PC-9 (cell line): ENCODE measurements at regions of chr7 and their contacts with region 1.

Region 1: GRCh38 chr7:5629941-5630340 is 151.5 kb downstream of the RNF216 start:
- DNase-seq: peak; percentile 52 to 72
- H3K4me3 ChIP-seq: no peak overlapping the region
- H3K27ac ChIP-seq: peak overlapping the region; percentile 37; the same call in 1 of the 2 replicates
- H3K4me1 ChIP-seq: peaks cover 13% of the 10 kb centered on the region
- H3K27me3 ChIP-seq: no peaks in the 10 kb centered on the region
- CTCF ChIP-seq: no peak

Region 2: GRCh38 chr7:5255832-5256231 is 374.1 kb before region 1 on chr7:
- CTCF ChIA-PET with region 1: interaction called, 10 read pairs
- POLR2A ChIA-PET with region 1: no interaction called
- intact Hi-C with region 1: no loop called
- DNase-seq: no peak
- H3K4me3 ChIP-seq: no peak overlapping the region
- H3K27ac ChIP-seq: no peak overlapping the region
- H3K4me1 ChIP-seq: no peaks in the 10 kb centered on the region
- H3K27me3 ChIP-seq: peaks cover 7% of the 10 kb centered on the region; the same call in 1 of the 2 replicates
- CTCF ChIP-seq: no peak

Region 3: DNA sequence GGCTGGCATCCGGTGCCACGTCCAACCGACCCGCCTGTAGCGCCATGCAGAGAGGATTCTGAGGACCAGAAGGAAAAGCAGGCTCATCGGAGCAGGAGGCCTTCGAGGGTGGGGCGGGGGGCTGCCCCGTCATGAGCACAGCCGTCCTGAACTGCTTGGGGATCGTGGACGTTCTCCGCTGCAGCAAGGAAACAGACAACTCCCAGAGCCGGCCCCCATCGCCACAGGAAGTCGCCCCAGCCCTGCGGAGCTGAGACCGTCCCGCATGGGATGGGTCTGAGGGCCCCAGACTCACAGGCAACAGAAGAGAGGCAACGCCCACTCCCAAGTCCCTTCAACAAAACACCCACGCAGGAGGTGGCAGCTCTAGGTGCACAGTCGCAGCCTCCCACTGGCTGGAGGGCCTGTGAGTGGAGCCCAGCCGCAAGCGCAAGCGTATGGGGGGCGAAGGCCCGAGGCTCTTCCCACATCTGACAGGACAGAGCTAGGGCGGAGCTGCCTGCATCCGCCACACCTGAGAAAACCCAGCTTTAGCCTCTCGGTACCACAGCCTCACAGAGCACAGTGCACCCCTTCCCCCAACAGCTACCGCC is 141.6 kb before region 1 on chr7:
- CTCF ChIA-PET with region 1: no interaction called
- POLR2A ChIA-PET with region 1: no interaction called
- intact Hi-C with region 1: no loop called
- DNase-seq: no peak
- H3K4me3 ChIP-seq: no peak overlapping the region
- H3K27ac ChIP-seq: no peak overlapping the region
- H3K4me1 ChIP-seq: 0 out of 2 replicates have a peak, but pooled peaks cover 5% of the 10 kb centered on the region
- H3K27me3 ChIP-seq: no peaks in the 10 kb centered on the region
- CTCF ChIP-seq: no peak

Region 4: DNA sequence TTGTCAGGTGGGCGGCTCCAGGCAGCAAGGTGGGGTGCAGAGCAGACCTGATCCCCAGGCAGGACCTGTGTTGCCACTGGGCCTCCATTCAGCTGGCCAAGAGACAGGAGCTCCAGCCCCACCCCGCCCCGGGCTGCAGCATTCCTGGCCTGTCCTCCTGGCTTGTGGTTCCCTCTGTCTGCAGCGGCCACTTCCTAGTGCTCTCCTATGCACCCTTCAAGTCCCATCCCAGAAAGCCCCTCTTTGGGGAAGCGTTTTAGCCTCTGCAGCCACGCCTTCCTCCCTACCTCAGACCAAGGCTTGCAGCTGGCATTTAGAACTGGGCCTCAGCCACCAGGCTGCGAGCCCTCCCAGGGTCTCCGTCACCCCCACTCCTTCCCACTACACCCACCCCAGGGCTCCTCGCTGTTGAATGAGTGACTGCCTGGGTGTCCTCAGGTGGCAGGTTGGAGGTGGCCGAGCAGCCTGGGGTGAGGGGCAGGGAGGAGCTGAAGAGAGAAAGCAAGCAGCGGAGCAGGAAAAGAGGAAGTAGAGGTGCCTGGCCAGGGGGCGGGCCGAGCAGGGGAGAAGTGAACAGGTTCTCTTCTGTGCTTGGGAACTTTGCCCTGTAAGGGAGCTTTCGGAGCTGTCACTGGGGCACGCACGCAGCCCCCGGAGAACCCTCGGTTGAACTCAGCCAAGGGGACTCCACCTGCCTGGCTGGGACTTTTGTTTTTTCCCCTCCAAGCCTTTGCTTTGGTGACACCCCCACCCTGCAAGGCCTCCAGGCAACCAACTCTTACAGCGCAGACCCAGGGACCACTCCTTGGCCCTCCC is 97.2 kb before region 1 on chr7:
- CTCF ChIA-PET with region 1: no interaction called
- POLR2A ChIA-PET with region 1: interaction called, 13 read pairs
- intact Hi-C with region 1: no loop called
- DNase-seq: peak; percentile 65 to 85
- H3K4me3 ChIP-seq: no peak overlapping the region
- H3K27ac ChIP-seq: no peak overlapping the region
- H3K4me1 ChIP-seq: peaks cover 32% of the 10 kb centered on the region
- H3K27me3 ChIP-seq: no peaks in the 10 kb centered on the region
- CTCF ChIP-seq: no peak

Region 5: DNA sequence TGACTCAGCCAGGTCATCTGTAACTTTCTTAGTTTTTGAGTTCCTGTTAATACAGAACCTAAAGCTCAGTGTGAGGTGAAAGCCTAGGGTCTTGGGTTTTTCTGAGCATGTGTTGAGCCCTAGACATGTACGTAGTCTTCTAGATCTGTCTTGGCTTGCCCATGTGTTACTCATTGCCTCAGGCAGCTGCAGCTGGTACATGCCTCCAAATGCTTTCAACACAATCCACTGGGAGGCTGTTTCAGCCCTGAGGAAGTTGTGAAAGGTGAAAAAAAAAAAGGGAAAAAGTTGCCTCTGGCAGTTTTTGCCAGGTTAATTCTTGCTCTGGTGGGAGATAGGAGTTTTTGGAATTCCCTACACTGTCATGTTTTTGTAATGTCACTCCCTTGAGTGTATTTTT is 16.9 kb after region 1 on chr7:
- CTCF ChIA-PET with region 1: interaction called, 17 read pairs
- POLR2A ChIA-PET with region 1: interaction called, 17 read pairs
- intact Hi-C with region 1: loop called (anchors 1 kb)
- DNase-seq: peak in 1 of 2 experiments; percentile 20
- H3K4me3 ChIP-seq: no peak overlapping the region
- H3K27ac ChIP-seq: no peak overlapping the region
- H3K4me1 ChIP-seq: peaks cover 26% of the 10 kb centered on the region
- H3K27me3 ChIP-seq: no peaks in the 10 kb centered on the region
- CTCF ChIP-seq: no peak

Region 6: DNA sequence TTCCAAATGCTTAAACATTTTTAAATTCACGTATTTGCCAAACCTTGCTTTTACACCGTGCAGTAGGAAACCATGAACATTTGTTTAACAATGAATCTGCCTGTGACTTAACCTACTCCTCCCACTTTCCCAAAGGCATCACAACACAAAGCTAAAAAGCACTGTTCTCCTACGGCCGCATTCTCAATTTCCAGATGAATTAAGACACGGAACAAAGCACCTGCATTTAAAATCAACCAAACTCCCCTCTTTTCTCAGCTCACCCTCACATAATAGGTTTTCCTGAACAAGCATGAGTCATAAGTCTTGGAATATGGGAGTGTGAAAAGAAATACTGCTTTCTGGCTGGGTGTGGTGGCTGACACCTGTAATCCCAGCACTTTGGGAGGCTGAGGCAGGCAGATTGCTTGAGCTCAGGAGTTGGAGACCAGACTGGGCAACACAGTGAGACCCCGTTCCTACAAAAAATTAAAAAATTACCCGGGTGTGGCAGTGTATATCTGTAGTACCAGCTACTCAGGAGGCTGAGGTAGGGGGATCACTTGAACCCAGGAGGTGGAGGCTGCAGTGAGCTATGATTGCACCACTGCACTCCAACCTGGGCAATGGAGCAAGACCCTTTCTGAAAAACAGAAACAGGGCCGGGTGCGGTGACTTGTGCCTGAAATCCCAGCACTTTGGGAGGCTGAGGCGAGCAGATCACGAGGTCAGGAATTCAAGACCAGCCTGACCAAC is 694.2 kb after region 1 on chr7:
- CTCF ChIA-PET with region 1: no interaction called
- POLR2A ChIA-PET with region 1: no interaction called
- intact Hi-C with region 1: no loop called
- DNase-seq: no peak
- H3K4me3 ChIP-seq: no peak overlapping the region
- H3K27ac ChIP-seq: no peak overlapping the region
- H3K4me1 ChIP-seq: no peaks in the 10 kb centered on the region
- H3K27me3 ChIP-seq: no peaks in the 10 kb centered on the region
- CTCF ChIP-seq: no peak